CD4-positive, alpha-beta T cell (primary cell): ENCODE measurements at regions of chr6 and their contacts with region 1.

Region 1: DNA sequence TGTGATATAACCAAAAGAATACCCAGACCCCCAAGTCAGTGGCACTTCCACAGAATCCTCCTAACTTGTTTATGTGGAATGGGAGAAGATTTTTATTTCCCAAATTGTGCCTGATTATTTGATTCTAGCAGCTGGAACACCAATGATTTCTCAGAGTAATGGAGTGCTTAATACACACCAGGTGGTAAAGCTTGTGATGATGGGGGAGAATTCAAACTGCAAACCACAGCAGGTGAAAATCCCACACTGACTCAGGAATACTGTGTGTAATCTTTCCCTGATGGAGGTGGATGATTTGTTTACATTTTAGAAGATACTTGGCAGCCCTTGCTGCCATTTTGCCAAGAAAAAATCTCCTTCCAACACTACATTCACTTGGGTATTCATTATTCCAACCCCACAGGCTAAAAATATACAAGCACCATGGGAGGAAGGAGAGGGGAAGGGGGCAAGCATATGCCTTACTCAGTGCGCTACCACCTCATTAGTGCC is 212.7 kb upstream of the PLN start:
- DNase-seq: no peak
- ATAC-seq: no peak
- H3K4me3 ChIP-seq: no peak overlapping the region
- H3K4me3 Mint-ChIP-seq: no peak overlapping the region
- H3K27ac ChIP-seq: no peak overlapping the region
- H3K27ac Mint-ChIP-seq: no peak overlapping the region
- H3K4me1 ChIP-seq: no peaks in the 10 kb centered on the region
- H3K4me1 Mint-ChIP-seq: no peaks in the 10 kb centered on the region
- H3K27me3 ChIP-seq: no peaks in the 10 kb centered on the region
- H3K27me3 Mint-ChIP-seq: no peaks in the 10 kb centered on the region
- CTCF ChIP-seq: no peak

Region 2: GRCh38 chr6:118317581-118318563 is 17.5 kb before region 1 on chr6:
- CTCF ChIA-PET with region 1: no interaction called
- POLR2A ChIA-PET with region 1: no interaction called
- intact Hi-C with region 1: loop called in 1 of 2 experiments (anchors 1 kb)
- DNase-seq: no peak
- ATAC-seq: no peak
- H3K4me3 ChIP-seq: no peak overlapping the region
- H3K4me3 Mint-ChIP-seq: no peak overlapping the region
- H3K27ac ChIP-seq: no peak overlapping the region
- H3K27ac Mint-ChIP-seq: no peak overlapping the region
- H3K4me1 ChIP-seq: no peaks in the 10 kb centered on the region
- H3K4me1 Mint-ChIP-seq: no peaks in the 10 kb centered on the region
- H3K27me3 ChIP-seq: no peaks in the 10 kb centered on the region
- H3K27me3 Mint-ChIP-seq: peaks cover 5% of the 10 kb centered on the region
- CTCF ChIP-seq: no peak

Region 3: DNA sequence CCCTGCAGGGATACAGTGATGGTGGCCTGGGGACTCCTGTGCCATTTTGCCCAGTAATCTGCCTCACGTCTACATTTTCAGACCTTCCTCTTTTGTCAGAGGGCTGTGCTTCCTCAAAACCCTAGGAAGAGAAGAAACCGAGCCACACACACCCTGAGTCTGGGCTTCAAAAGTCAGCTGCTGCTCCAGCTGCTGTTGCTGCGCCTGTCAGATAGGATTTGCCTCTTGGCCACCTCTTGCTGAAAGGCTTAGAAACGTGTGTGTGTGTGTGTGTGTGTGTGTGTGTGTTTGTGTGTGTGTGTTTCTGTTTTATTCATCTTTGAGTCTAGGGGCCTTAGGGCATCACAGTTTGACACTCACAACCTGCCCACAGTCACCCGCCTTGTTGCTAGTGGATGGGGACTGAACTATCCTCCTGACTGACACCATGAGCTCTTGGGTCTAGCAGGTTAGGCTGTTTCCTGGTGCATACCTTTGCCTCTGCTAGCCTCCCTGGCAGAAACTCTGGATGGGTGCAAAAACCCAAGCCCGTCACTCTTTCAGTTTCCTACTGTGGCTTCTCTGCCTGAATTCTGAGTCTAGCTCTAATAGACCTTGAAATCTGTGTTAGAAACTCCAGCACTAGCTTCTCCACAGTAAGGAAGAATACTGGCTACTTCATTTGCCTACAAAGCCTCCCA is 410.9 kb after region 1 on chr6:
- CTCF ChIA-PET with region 1: no interaction called
- POLR2A ChIA-PET with region 1: no interaction called
- intact Hi-C with region 1: no loop called
- DNase-seq: peak in 2 of 14 experiments; percentile 33 to 40
- ATAC-seq: no peak
- H3K4me3 ChIP-seq: no peak overlapping the region
- H3K4me3 Mint-ChIP-seq: no peak overlapping the region
- H3K27ac ChIP-seq: no peak overlapping the region
- H3K27ac Mint-ChIP-seq: no peak overlapping the region
- H3K4me1 ChIP-seq: peaks cover 10% of the 10 kb centered on the region
- H3K4me1 Mint-ChIP-seq: peaks cover 22% of the 10 kb centered on the region
- H3K27me3 ChIP-seq: no peaks in the 10 kb centered on the region
- H3K27me3 Mint-ChIP-seq: no peaks in the 10 kb centered on the region
- CTCF ChIP-seq: no peak